GM13976 (cell line): ENCODE measurements at regions of chr10 and their contacts with region 1.

Region 1: GRCh38 chr10:48656241-48656913 is 28.3 kb upstream of the WDFY4 start:
- DNase-seq: peak; percentile 95
- CTCF ChIP-seq: peak; percentile 100

Region 2: DNA sequence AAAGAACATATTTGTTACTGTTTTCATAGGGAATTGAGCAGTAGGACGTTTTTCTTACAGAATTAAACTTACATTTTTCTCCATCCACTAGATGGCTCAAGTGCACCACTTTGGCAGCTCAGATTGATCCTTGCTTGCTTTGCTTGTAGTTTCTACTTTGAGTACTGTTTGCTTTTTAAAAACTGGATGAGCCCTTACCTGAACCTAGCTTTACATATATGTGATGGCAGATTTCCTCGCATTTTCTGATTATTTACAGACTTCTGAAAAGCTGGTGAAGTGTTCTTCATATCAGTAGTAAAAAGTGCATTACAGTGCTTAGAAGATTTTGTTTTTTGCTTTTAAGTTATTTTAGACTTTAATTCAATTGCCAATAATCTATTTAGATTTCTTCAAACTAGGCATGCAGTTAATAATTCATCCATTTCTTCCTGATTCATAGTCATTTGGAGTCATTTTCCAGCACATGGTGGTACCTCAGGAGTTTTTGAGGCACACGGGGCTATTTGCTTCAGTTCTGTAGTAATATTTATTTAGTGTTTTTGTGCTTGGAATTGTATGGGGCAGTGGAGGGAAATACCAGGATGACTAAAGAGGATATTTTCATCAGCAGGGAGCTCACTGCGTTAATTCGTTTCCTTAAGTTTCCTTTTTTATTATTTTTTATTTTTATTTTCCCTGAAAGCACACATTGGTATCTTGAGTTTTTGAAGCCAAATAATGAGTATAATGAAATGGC is 292.6 kb before region 1 on chr10:
- in situ Hi-C with region 1: loop called (anchors 10 kb)
- DNase-seq: peak; percentile 35
- CTCF ChIP-seq: peak; percentile 52

Region 3: GRCh38 chr10:48506147-48506917 is 150.0 kb before region 1 on chr10:
- in situ Hi-C with region 1: no loop called
- DNase-seq: peak; percentile 59
- CTCF ChIP-seq: peak; percentile 29

Region 4: GRCh38 chr10:48551861-48552591 is 104.4 kb before region 1 on chr10:
- in situ Hi-C with region 1: loop called (anchors 5 kb)
- DNase-seq: peak; percentile 79
- CTCF ChIP-seq: peak; percentile 56

Region 5: DNA sequence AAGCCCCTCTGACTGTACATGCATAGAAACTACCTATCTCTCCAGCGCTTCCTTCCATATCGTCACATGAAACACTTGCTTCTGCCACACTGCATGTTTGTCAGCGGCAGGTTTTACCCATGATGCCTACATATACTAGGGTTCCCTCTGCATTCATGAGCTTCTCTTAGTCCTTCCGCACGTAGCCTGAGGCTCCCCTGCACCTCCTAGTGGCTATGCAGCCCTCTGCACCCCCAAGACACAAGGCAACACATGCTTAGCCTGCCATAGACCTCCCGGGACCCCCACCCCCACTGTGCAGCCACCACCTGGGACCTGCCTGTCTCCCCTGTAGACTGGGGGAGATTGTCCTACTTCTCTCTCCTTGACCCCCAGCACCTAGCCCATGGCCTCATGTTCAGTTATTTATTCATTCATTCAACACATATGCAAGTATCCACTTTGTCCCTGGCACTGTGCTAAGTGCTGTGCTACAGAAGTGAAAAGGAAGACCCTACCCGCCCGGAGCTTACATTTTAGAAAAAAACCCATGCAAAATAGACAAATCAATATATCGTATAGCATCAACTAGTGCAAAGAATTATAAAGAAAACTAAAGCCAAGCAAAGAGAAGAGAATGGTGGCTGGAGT is 508.3 kb after region 1 on chr10:
- in situ Hi-C with region 1: loop called (anchors 25 kb)
- DNase-seq: peak; percentile 66
- CTCF ChIP-seq: peak; percentile 55